ENCODE measurements at regions of chr3 and their contacts with region 1.

Region 1: DNA sequence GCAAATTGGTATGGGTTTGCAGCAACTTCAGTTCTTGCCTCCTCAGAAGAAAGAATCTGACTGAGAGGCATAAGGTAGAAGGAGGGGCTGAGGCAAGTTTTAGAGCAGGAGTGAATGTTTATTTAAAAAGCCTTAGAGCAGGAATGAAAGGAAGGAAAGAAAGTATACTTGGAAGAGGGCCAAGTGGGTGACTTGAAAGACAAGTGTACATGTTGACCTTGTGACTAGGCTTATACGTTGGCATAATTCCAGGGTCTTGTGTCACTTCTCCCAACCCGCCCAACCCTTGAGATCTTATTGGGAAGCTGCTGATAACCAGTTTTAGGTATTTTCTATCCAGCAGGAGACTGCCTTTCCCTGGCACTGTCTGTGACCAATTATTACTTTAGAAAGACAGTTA is 436.9 kb upstream of the ZNF717 start:
- DNase-seq: peak; percentile 78
- ATAC-seq: peak; percentile 58
- H3K4me3 ChIP-seq: no peak overlapping the region
- H3K27ac ChIP-seq: no peak overlapping the region
- H3K4me1 ChIP-seq: peaks cover 4% of the 10 kb centered on the region; the same call in 1 of the 2 replicates
- H3K27me3 ChIP-seq: no peaks in the 10 kb centered on the region
- CTCF ChIP-seq: no peak

Region 2: GRCh38 chr3:76177615-76178014 is 44.6 kb before region 1 on chr3:
- CTCF ChIA-PET with region 1: no interaction called
- POLR2A ChIA-PET with region 1: no interaction called
- intact Hi-C with region 1: no loop called
- DNase-seq: no peak
- ATAC-seq: no peak
- H3K4me3 ChIP-seq: no peak overlapping the region
- H3K27ac ChIP-seq: no peak overlapping the region
- H3K4me1 ChIP-seq: no peaks in the 10 kb centered on the region
- H3K27me3 ChIP-seq: peaks cover 9% of the 10 kb centered on the region; the same call in 1 of the 2 replicates
- CTCF ChIP-seq: no peak

Region 3: GRCh38 chr3:76245046-76245445 is 22.8 kb after region 1 on chr3:
- CTCF ChIA-PET with region 1: no interaction called
- POLR2A ChIA-PET with region 1: no interaction called
- intact Hi-C with region 1: loop called (anchors 2 kb)
- DNase-seq: peak; percentile 74
- ATAC-seq: peak; percentile 62
- H3K4me3 ChIP-seq: no peak overlapping the region
- H3K27ac ChIP-seq: no peak overlapping the region
- H3K4me1 ChIP-seq: peaks cover 9% of the 10 kb centered on the region
- H3K27me3 ChIP-seq: peaks cover 6% of the 10 kb centered on the region; the same call in 1 of the 2 replicates
- CTCF ChIP-seq: no peak